Dorsolateral prefrontal cortex (tissue), 120 donors: ENCODE measurements at regions of chr12 and their contacts with region 1.

Region 1: GRCh38 chr12:129325566-129325965 is 472.3 kb downstream of the GLT1D1 start:
- DNase-seq: no peak
- H3K4me3 ChIP-seq: no peak overlapping the region
- H3K27ac ChIP-seq: no peak overlapping the region
- H3K27me3 ChIP-seq: peaks cover 0 to 14% (median 0%) of the 10 kb centered on the region in 45 donors
- CTCF ChIP-seq: no peak

Region 2: GRCh38 chr12:129276361-129277060 is 49.1 kb before region 1 on chr12:
- intact Hi-C with region 1: loop called in 1 of 2 experiments (anchors 10 kb)
- DNase-seq: no peak
- H3K4me3 ChIP-seq: no peak overlapping the region
- H3K27ac ChIP-seq: no peak overlapping the region
- H3K27me3 ChIP-seq: no peaks in the 10 kb centered on the region
- CTCF ChIP-seq: no peak